Endothelial cell of umbilical vein (primary cell): ENCODE measurements at regions of chr10 and their contacts with region 1.

Region 1: GRCh38 chr10:17228091-17228940 is at the start of gene VIM:
- DNase-seq: peak; percentile 97
- H3K4me3 ChIP-seq: peak within 1 kb of the TSS; percentile 66 to 87 (median 83)
- H3K27ac ChIP-seq: peak within 1 kb of the TSS; percentile 99
- H3K4me1 ChIP-seq: peaks cover 24% of the 10 kb centered on the region
- H3K27me3 ChIP-seq: no peaks in the 10 kb centered on the region
- CTCF ChIP-seq: peak in 1 of 2 donors; percentile 16
- POLR2A ChIP-seq: peak; percentile 92
- total RNA-seq, gene VIM: 5,754 and 5,781 TPM in 2 replicates

Region 2: GRCh38 chr10:16843252-16843870 is 385.0 kb before region 1 on chr10:
- CTCF ChIA-PET with region 1: interaction called, 5 read pairs
- POLR2A ChIA-PET with region 1: no interaction called
- dilution Hi-C with region 1: no loop called
- intact Hi-C with region 1: loop called (anchors 1 kb)
- DNase-seq: peak; percentile 83
- H3K4me3 ChIP-seq: no peak overlapping the region
- H3K27ac ChIP-seq: peak overlapping the region; percentile 32
- H3K4me1 ChIP-seq: peaks cover 2% of the 10 kb centered on the region
- H3K27me3 ChIP-seq: no peaks in the 10 kb centered on the region
- CTCF ChIP-seq: peak; percentile 19 to 27
- POLR2A ChIP-seq: no peak

Region 3: DNA sequence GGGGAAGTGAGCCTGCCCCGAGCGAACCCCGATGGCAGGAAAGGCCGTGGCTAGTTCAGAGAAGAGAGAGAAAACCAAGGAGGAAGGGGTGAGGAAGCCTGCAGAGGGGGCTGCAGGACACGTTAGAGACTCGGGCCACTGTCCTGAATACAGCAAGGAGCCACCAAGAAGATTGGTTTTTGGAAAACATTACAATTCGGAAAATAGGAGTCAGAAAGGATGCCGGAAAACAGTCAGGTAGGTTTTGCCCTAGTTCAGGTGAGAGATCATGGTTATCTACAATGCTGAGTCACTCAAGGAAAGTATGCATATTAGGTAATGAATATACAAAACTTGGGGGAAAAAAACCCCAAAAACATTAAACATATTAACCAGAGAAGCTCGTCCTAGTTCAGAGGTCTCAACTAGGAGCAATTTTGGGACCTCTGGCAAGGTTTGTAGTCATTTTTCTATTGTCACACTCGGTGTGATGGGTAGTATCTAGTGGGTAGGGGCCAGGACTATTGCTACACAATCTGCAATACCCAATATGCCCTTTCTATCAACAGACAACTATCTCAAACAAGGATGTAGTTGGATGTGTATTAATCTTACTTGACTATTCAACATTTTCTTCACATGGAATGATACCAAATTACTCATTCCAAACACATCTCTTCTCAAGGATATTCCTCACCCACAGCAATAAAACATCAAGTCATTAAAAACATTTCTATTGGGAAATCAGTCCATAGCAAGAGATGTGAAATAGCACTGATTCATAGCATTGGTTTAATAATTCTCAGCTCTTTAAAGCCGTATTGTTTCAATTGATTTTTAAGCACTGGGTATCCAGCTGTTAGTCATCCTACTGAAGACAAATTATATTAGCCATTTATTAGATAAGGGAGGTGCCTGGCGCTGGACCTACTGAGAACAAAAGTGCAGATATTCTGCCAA is 336.7 kb before region 1 on chr10:
- CTCF ChIA-PET with region 1: interaction called, 8 read pairs
- POLR2A ChIA-PET with region 1: interaction called, 4 read pairs
- dilution Hi-C with region 1: no loop called
- intact Hi-C with region 1: loop called (anchors 1 kb)
- DNase-seq: peak; percentile 70
- H3K4me3 ChIP-seq: no peak overlapping the region
- H3K27ac ChIP-seq: peak overlapping the region; percentile 5
- H3K4me1 ChIP-seq: peaks cover 8% of the 10 kb centered on the region
- H3K27me3 ChIP-seq: no peaks in the 10 kb centered on the region
- CTCF ChIP-seq: peak; percentile 45 to 58
- POLR2A ChIP-seq: peak; percentile 94

Region 4: GRCh38 chr10:17023386-17024298 is 204.7 kb before region 1 on chr10:
- CTCF ChIA-PET with region 1: interaction called, 4 read pairs
- POLR2A ChIA-PET with region 1: interaction called, 7 read pairs
- dilution Hi-C with region 1: no loop called
- intact Hi-C with region 1: loop called (anchors 1 kb)
- DNase-seq: peak; percentile 96
- H3K4me3 ChIP-seq: peak overlapping the region in 1 of 3 experiments; percentile 35
- H3K27ac ChIP-seq: peak overlapping the region; percentile 72
- H3K4me1 ChIP-seq: peaks cover 51% of the 10 kb centered on the region
- H3K27me3 ChIP-seq: no peaks in the 10 kb centered on the region
- CTCF ChIP-seq: no peak
- POLR2A ChIP-seq: peak; percentile 22

Region 5: GRCh38 chr10:17113889-17114540 is 114.3 kb before region 1 on chr10:
- CTCF ChIA-PET with region 1: interaction called, 5 read pairs
- POLR2A ChIA-PET with region 1: interaction called, 4 read pairs
- dilution Hi-C with region 1: no loop called
- intact Hi-C with region 1: loop called (anchors 2 kb)
- DNase-seq: peak; percentile 46
- H3K4me3 ChIP-seq: no peak overlapping the region
- H3K27ac ChIP-seq: no peak overlapping the region
- H3K4me1 ChIP-seq: peaks cover 20% of the 10 kb centered on the region
- H3K27me3 ChIP-seq: no peaks in the 10 kb centered on the region
- CTCF ChIP-seq: no peak
- POLR2A ChIP-seq: no peak

Region 6: GRCh38 chr10:17188644-17189172 is 39.6 kb before region 1 on chr10:
- CTCF ChIA-PET with region 1: no interaction called
- POLR2A ChIA-PET with region 1: no interaction called
- dilution Hi-C with region 1: no loop called
- intact Hi-C with region 1: no loop called
- DNase-seq: no peak
- H3K4me3 ChIP-seq: no peak overlapping the region
- H3K27ac ChIP-seq: no peak overlapping the region
- H3K4me1 ChIP-seq: no peaks in the 10 kb centered on the region
- H3K27me3 ChIP-seq: no peaks in the 10 kb centered on the region
- CTCF ChIP-seq: no peak
- POLR2A ChIP-seq: no peak

Region 7: GRCh38 chr10:17216217-17216900 is 12.0 kb before region 1 on chr10:
- CTCF ChIA-PET with region 1: interaction called, 35 read pairs
- POLR2A ChIA-PET with region 1: interaction called, 21 read pairs
- dilution Hi-C with region 1: no loop called
- intact Hi-C with region 1: loop called (anchors 1 kb)
- DNase-seq: peak; percentile 98
- H3K4me3 ChIP-seq: peak overlapping the region in 1 of 3 experiments; percentile 3
- H3K27ac ChIP-seq: peak overlapping the region; percentile 99
- H3K4me1 ChIP-seq: peaks cover 33% of the 10 kb centered on the region
- H3K27me3 ChIP-seq: no peaks in the 10 kb centered on the region
- CTCF ChIP-seq: no peak
- POLR2A ChIP-seq: peak; percentile 77